GM12878 (cell line): ENCODE measurements at regions of chr3 and their contacts with region 1.

Region 1: GRCh38 chr3:37855363-37855970 is 6.2 kb upstream of the CTDSPL start:
- DNase-seq: peak; percentile 5
- ATAC-seq: peak; percentile 91
- H3K4me3 ChIP-seq: no peak overlapping the region
- H3K27ac ChIP-seq: no peak overlapping the region
- H3K4me1 ChIP-seq: no peaks in the 10 kb centered on the region
- H3K27me3 ChIP-seq: peaks cover 0 to 4% of the 10 kb centered on the region in 2 experiments; a peak in 2 of 4 replicates
- CTCF ChIP-seq: peak; percentile 89 to 98 (median 89)
- EP300 ChIP-seq: no peak
- POLR2A ChIP-seq: no peak
- RAD21 ChIP-seq: peak; percentile 94

Region 2: GRCh38 chr3:37872413-37873160 is 17.1 kb after region 1 on chr3:
- CTCF ChIA-PET with region 1: interaction called, 22 read pairs
- POLR2A ChIA-PET with region 1: no interaction called
- RAD21 ChIA-PET with region 1: no interaction called
- SMC1A ChIA-PET with region 1: no interaction called
- in situ Hi-C with region 1: no loop called
- intact Hi-C with region 1: no loop called
- DNase-seq: no peak
- ATAC-seq: no peak
- H3K4me3 ChIP-seq: no peak overlapping the region
- H3K27ac ChIP-seq: no peak overlapping the region
- H3K4me1 ChIP-seq: no peaks in the 10 kb centered on the region
- H3K27me3 ChIP-seq: no peaks in the 10 kb centered on the region
- CTCF ChIP-seq: no peak
- EP300 ChIP-seq: no peak
- POLR2A ChIP-seq: no peak
- RAD21 ChIP-seq: no peak

Region 3: GRCh38 chr3:37907906-37908305 is 52.4 kb after region 1 on chr3:
- CTCF ChIA-PET with region 1: interaction called, 24 read pairs
- POLR2A ChIA-PET with region 1: no interaction called
- RAD21 ChIA-PET with region 1: no interaction called
- SMC1A ChIA-PET with region 1: interaction called, 8 read pairs
- in situ Hi-C with region 1: no loop called
- intact Hi-C with region 1: loop called (anchors 5 kb)
- DNase-seq: peak; percentile 84
- ATAC-seq: peak; percentile 92
- H3K4me3 ChIP-seq: no peak overlapping the region
- H3K27ac ChIP-seq: peak overlapping the region; percentile 20; the same call in 1 of the 2 replicates
- H3K4me1 ChIP-seq: peaks cover 29% of the 10 kb centered on the region
- H3K27me3 ChIP-seq: no peaks in the 10 kb centered on the region
- CTCF ChIP-seq: no peak
- EP300 ChIP-seq: peak; percentile 95 to 97
- POLR2A ChIP-seq: no peak
- RAD21 ChIP-seq: no peak; the same call in 1 of the 2 replicates

Region 4: DNA sequence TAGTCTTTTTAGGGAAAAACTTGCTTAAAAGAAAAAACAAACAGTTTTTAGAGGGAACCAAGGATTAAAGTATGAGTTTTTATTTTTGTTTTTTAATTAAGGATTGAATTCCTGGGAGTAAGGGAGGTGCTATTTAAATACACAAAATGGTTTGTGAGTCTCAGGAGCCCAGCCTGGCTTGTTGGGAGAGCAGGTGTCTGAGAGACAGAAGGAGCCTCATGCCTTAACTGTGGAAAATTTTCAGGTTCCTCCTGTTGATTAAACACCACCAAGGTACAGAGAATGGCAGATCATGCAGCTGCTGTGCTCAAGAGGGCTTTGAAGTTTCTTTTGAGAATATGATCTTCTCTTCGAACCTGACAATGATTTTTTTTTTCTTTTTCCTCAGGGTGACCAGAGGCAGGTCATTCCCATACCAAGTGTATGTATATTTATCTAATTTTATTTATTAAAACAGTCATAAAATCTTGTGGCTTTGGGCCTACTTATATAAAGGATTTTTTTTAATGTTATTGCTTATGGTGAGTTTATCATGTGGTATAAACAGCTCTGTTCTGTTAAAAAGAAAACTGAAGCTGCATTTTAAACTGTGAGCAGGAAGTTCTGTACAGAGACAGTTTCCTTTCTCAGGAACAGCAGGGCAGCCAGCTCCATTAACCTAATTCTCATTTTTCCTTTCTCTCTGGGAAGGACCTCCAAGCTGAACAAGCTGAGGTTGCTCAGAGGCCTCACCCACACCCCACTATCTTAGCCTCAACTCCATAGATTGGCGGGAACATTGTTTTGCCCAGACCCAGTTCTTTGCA is 101.5 kb after region 1 on chr3:
- CTCF ChIA-PET with region 1: interaction called, 14 read pairs
- POLR2A ChIA-PET with region 1: no interaction called
- RAD21 ChIA-PET with region 1: interaction called, 111 read pairs
- SMC1A ChIA-PET with region 1: interaction called, 3 read pairs
- in situ Hi-C with region 1: loop called (anchors 5 kb)
- intact Hi-C with region 1: no loop called
- DNase-seq: no peak
- ATAC-seq: no peak; the same call in 2 of the 3 replicates
- H3K4me3 ChIP-seq: no peak overlapping the region
- H3K27ac ChIP-seq: 0 out of 2 replicates have a peak overlapping the region, but pooled peaks have one; percentile 8
- H3K4me1 ChIP-seq: peaks cover 3% of the 10 kb centered on the region
- H3K27me3 ChIP-seq: no peaks in the 10 kb centered on the region; a peak in 1 of 4 replicates
- CTCF ChIP-seq: no peak
- EP300 ChIP-seq: no peak
- POLR2A ChIP-seq: no peak
- RAD21 ChIP-seq: no peak